ENCODE measurements at regions of chr2 and their contacts with region 1.

Region 1: GRCh38 chr2:190088917-190089316 is 26.4 kb upstream of the MSTN start:
- DNase-seq: peak; percentile 47
- H3K4me3 ChIP-seq: no peak overlapping the region
- H3K27ac ChIP-seq: no peak overlapping the region
- H3K4me1 ChIP-seq: no peaks in the 10 kb centered on the region
- H3K27me3 ChIP-seq: no peaks in the 10 kb centered on the region
- CTCF ChIP-seq: peak; percentile 71 to 72

Region 2: DNA sequence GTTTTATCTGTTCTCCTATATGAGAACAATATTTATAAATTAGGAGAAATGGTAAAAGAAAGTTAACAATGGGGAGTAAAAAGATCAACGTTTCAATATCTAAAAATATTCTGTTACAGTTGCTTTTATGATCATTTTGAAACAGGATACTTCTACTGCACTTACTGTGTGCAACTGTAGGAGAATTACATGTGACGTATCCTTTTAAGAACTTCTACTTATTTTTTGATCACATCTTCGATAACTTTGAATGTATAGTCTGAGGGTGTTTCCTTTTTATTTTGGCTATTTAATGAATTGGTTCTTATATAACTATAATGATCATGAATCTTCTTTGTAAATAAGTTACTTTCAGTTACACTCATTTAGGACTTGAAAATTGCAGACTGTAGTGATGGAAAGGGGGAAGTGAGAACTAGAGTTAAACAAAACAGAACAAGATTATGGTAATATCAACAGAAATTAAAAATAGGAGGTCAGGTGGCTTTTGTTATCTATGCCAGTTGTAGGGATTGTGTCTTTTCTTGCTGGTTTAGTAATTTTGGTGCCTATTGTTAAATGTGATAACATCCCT is 136.3 kb before region 1 on chr2:
- CTCF ChIA-PET with region 1: no interaction called
- dilution Hi-C with region 1: no loop called
- in situ Hi-C with region 1: no loop called
- intact Hi-C with region 1: no loop called
- DNase-seq: no peak
- H3K4me3 ChIP-seq: no peak overlapping the region
- H3K27ac ChIP-seq: no peak overlapping the region
- H3K4me1 ChIP-seq: no peaks in the 10 kb centered on the region
- H3K27me3 ChIP-seq: no peaks in the 10 kb centered on the region
- CTCF ChIP-seq: no peak

Region 3: GRCh38 chr2:190277234-190278112 is 188.6 kb after region 1 on chr2:
- CTCF ChIA-PET with region 1: no interaction called
- dilution Hi-C with region 1: no loop called
- in situ Hi-C with region 1: no loop called
- intact Hi-C with region 1: loop called (anchors 1 kb)
- DNase-seq: peak; percentile 48
- H3K4me3 ChIP-seq: no peak overlapping the region
- H3K27ac ChIP-seq: no peak overlapping the region
- H3K4me1 ChIP-seq: peaks cover 25% of the 10 kb centered on the region
- H3K27me3 ChIP-seq: no peaks in the 10 kb centered on the region
- CTCF ChIP-seq: peak; percentile 36 to 56

Region 4: GRCh38 chr2:190319555-190320498 is 230.9 kb after region 1 on chr2 and contains the start of gene HIBCH:
- CTCF ChIA-PET with region 1: no interaction called
- dilution Hi-C with region 1: no loop called
- in situ Hi-C with region 1: loop called in 1 of 2 experiments (anchors 25 kb)
- intact Hi-C with region 1: no loop called
- DNase-seq: peak; percentile 100
- H3K4me3 ChIP-seq: peak within 1 kb of the TSS; percentile 66 to 77 (median 75)
- H3K27ac ChIP-seq: peak within 1 kb of the TSS; percentile 37
- H3K4me1 ChIP-seq: peaks cover 3% of the 10 kb centered on the region
- H3K27me3 ChIP-seq: no peaks in the 10 kb centered on the region
- CTCF ChIP-seq: peak; percentile 84 to 90
- total RNA-seq, gene HIBCH: 17.0 to 20.5 TPM

Region 5: DNA sequence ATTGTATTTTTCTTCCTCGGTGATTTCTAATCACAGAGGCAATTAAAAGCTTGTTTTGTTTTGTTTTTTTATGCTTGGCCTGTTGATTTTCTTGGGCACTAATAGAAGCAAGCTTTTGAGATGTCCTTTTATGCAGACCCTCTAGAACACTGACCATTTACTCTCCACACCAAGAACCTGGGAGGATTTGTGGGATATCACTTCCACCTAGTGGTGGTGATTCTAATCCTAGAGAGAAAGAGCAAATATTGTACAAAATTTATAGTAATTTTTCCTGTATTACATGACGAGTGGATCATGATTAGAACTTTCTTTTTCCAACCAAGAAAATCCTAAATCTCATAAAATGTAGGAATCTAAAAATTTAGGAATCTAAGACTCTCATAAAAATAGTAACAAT is 422.2 kb after region 1 on chr2:
- CTCF ChIA-PET with region 1: no interaction called
- dilution Hi-C with region 1: no loop called
- in situ Hi-C with region 1: loop called (anchors 25 kb)
- intact Hi-C with region 1: loop called (anchors 1 kb)
- DNase-seq: no peak
- H3K4me3 ChIP-seq: no peak overlapping the region
- H3K27ac ChIP-seq: no peak overlapping the region
- H3K4me1 ChIP-seq: peaks cover 6% of the 10 kb centered on the region
- H3K27me3 ChIP-seq: no peaks in the 10 kb centered on the region
- CTCF ChIP-seq: peak; percentile 30 to 52